Activated CD4-positive, alpha-beta T cell treated with anti-CD3 and anti-CD28 coated beads for 36 hours (primary cell): ENCODE measurements at regions of chr2 and their contacts with region 1.

Region 1: GRCh38 chr2:160406591-160407392 is 86.8 kb downstream of the RBMS1 start:
- DNase-seq: peak; percentile 82
- ATAC-seq: peak; percentile 75
- H3K4me3 Mint-ChIP-seq: peak overlapping the region; percentile 85
- H3K27ac Mint-ChIP-seq: peak overlapping the region; percentile 98
- H3K4me1 Mint-ChIP-seq: peaks cover 79% of the 10 kb centered on the region
- H3K27me3 Mint-ChIP-seq: no peaks in the 10 kb centered on the region

Region 2: DNA sequence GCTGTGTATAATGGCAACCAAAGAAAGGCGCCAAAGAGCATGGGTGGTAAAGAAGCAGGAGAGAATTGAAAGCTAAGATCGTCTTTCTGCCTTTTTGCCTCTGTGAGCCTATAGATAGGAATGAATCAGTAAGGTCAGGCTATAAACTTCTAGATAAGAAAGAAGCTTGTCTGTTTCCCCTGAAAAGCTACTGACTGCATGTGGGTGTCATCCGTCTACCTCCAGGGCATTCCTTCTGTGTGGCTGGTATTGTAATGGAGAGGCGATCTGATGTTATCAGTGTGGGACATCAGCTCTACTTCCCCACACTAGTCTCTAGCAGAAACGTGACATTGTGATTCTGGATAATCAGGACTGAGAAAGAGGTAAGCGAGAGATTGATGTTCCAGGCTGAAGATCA is 281.0 kb before region 1 on chr2:
- CTCF ChIA-PET with region 1: no interaction called
- POLR2A ChIA-PET with region 1: no interaction called
- intact Hi-C with region 1: no loop called
- DNase-seq: no peak
- ATAC-seq: no peak
- H3K4me3 Mint-ChIP-seq: no peak overlapping the region
- H3K27ac Mint-ChIP-seq: no peak overlapping the region
- H3K4me1 Mint-ChIP-seq: no peaks in the 10 kb centered on the region
- H3K27me3 Mint-ChIP-seq: peaks cover 7% of the 10 kb centered on the region

Region 3: DNA sequence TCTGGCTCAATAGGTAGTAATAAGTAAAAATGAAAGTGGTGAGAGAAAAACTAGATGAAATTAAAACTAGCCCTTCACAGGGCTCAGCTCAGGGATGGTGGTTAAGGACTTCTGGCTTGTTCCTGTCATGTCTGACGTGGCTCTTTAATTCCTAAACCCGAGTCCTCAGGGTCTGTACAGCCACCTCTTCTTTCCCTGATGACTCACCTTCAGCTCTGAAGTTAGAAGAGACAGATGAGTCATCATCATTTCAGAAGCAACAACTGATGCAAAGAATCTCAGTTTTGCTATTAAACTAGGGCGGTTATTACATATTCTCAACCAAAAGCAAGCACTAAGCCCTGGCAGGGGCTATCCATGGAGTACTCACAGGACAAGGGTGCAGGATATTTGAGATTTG is 182.7 kb before region 1 on chr2:
- CTCF ChIA-PET with region 1: no interaction called
- POLR2A ChIA-PET with region 1: no interaction called
- intact Hi-C with region 1: loop called (anchors 5 kb)
- DNase-seq: peak; percentile 56
- ATAC-seq: peak; percentile 78
- H3K4me3 Mint-ChIP-seq: no peak overlapping the region
- H3K27ac Mint-ChIP-seq: peak overlapping the region; percentile 75
- H3K4me1 Mint-ChIP-seq: peaks cover 56% of the 10 kb centered on the region
- H3K27me3 Mint-ChIP-seq: peaks cover 14% of the 10 kb centered on the region

Region 4: DNA sequence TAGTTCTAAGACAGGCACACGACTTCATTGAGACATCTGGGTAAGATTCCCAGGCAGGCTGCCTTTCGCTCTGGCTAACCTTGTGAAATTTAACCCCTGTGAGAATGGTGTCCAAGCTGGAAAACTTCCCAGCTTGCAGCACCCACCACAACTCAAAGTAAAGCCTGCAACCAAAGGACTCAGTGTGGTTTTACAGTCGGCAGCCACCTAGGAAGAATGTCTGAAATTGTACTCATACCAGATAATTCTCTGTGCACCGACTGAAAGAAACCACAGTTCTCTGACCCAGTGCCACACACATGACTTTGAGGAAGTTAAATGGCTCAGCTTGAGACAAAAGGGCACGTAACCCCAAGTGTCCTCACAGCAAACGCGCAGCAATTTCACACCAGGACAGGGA is 38.9 kb before region 1 on chr2:
- CTCF ChIA-PET with region 1: no interaction called
- POLR2A ChIA-PET with region 1: no interaction called
- intact Hi-C with region 1: no loop called
- DNase-seq: peak; percentile 31
- ATAC-seq: peak; percentile 71
- H3K4me3 Mint-ChIP-seq: peak overlapping the region; percentile 33
- H3K27ac Mint-ChIP-seq: peak overlapping the region; percentile 68
- H3K4me1 Mint-ChIP-seq: peaks cover 70% of the 10 kb centered on the region
- H3K27me3 Mint-ChIP-seq: no peaks in the 10 kb centered on the region

Region 5: DNA sequence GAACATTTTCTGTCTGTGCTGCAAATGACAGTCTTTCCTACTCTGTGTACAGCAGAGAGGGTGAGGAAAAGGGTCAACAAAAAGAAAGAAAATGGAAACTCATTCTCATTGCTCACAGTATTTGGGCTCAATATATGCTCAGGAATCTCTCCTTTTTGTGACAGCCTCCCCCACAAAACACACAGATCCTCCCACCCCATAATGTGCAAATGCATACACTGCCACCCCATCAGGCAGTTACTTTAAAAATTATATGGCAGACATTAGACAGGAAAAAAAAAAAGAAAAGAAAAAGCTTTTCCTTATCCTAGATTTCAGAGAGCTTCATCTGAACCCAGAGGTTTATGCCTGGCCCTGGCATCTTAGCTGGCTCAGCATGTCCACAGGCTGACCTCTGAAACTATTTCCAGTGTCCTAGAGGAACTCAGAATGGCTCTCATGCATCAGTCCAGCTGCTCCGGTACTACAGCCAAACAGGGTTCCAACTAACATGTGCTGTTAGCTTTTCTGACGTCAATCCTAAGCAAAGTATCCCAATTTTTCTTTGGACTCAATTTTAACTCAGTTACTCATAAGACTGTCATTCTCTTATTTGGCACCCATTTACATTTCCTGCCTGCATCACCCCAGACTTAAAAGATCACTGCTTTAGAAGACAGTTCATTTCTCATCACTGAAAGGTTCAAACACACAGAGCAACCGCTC is 19.1 kb before region 1 on chr2:
- CTCF ChIA-PET with region 1: interaction called, 10 read pairs
- POLR2A ChIA-PET with region 1: no interaction called
- intact Hi-C with region 1: loop called in 1 of 2 experiments (anchors 2 kb)
- DNase-seq: no peak
- ATAC-seq: peak; percentile 31
- H3K4me3 Mint-ChIP-seq: peak overlapping the region; percentile 51
- H3K27ac Mint-ChIP-seq: peak overlapping the region; percentile 89
- H3K4me1 Mint-ChIP-seq: peaks cover 76% of the 10 kb centered on the region
- H3K27me3 Mint-ChIP-seq: no peaks in the 10 kb centered on the region

Region 6: DNA sequence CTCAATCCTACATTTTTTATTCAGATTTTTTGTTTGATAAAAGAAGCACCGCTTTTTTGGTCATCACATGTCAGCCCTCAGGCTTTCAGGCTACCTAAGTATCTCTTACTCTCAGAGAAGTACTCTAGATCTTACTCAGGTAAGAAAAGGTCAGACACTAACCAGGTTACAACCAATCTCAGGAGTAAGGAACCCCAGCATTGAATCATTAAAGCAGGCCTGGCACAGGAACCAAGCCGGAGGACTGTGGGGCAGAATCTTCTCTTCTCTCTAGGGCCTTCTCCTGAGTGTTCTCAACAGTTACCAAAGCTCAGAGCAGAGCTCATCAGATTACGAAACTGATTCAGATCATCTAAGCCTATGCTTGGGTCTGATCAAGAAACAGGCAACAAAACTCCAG is 58.6 kb after region 1 on chr2:
- CTCF ChIA-PET with region 1: no interaction called
- POLR2A ChIA-PET with region 1: interaction called, 10 read pairs
- intact Hi-C with region 1: no loop called
- DNase-seq: peak; percentile 62
- ATAC-seq: peak; percentile 89
- H3K4me3 Mint-ChIP-seq: peak overlapping the region; percentile 2
- H3K27ac Mint-ChIP-seq: peak overlapping the region; percentile 83
- H3K4me1 Mint-ChIP-seq: peaks cover 84% of the 10 kb centered on the region
- H3K27me3 Mint-ChIP-seq: no peaks in the 10 kb centered on the region

Region 7: DNA sequence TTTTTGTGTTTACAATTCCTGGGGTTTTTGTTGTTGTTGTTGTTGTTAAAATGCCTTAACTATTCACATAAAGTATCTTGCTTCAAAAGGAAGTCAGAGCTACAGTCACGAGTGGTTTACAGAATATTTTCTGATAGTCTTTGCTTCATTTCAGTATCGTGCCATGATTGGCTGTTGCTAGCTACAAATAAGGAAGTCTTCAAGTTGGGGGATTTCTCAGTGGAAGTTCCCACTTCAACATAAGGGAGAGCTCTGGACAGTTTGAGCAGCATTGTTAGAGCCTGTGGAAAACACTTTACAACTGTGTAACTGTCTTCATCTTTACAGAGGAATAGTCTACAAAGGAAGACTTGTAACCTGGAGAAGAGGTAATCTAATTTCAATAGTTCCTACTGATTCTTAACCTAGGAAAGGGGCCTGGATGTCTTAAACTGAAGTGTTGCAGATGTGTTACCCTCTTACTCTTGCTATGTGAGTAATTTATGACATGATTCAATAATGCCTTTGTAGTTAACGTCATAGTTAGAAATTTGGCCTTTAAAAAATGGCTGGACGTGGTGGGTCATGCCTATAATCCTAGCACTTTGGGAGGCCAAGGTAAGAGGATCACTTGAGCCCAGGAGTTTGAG is 730.0 kb after region 1 on chr2:
- CTCF ChIA-PET with region 1: no interaction called
- POLR2A ChIA-PET with region 1: no interaction called
- intact Hi-C with region 1: loop called in 1 of 2 experiments (anchors 10 kb)
- DNase-seq: peak; percentile 30
- ATAC-seq: peak; percentile 82
- H3K4me3 Mint-ChIP-seq: peak overlapping the region; percentile 83
- H3K27ac Mint-ChIP-seq: peak overlapping the region; percentile 98
- H3K4me1 Mint-ChIP-seq: peaks cover 52% of the 10 kb centered on the region
- H3K27me3 Mint-ChIP-seq: no peaks in the 10 kb centered on the region